ENCODE measurements at regions of chr10 and their contacts with region 1.

Region 1: DNA sequence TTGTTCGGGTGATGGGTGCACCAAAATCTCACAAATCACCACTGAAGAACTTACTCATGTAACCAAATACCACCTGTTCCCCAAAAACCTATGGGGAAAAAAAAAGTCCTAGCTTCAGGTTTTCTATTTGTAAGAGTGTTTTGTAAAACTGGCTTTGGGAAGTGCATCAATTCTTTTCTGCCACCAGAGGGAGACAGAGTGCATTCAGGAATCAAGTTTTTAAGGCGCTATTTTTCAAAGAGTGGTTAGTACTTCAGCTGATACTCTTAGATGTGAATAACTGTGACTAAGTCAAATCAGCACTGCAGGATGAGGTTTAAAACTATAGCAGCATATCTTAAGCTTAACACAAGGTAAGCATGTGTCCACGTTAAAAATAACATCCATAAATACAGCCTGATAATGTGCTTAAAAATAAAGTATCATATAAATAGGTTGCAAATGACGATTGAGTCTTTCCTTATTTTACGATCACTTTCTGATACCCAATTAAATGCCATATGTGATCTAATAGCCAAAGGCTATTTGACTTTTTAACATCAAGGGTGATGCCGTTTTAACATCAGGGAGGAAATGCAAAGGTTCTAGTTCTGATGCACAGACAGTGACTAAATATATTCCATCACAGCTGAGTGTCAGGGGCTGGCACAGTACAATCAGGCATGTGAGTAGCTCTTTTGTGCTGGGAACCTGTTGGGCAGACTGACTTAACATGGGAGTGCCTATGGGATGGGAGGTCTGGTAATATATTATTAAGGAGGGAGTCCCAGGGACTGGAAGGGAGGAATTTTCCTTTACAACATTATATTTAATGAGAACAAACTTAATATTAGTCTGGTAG is 10.6 kb upstream of the LYZL2 start:
- DNase-seq: peak; percentile 53
- ATAC-seq: no peak
- H3K4me3 ChIP-seq: no peak overlapping the region
- H3K27ac ChIP-seq: no peak overlapping the region
- H3K4me1 ChIP-seq: peaks cover 45% of the 10 kb centered on the region
- H3K27me3 ChIP-seq: peaks cover 0 to 4% of the 10 kb centered on the region in 2 experiments; a peak in 1 of 5 replicates
- CTCF ChIP-seq: peak; percentile 66
- EP300 ChIP-seq: no peak
- POLR2A ChIP-seq: no peak
- RAD21 ChIP-seq: no peak

Region 2: DNA sequence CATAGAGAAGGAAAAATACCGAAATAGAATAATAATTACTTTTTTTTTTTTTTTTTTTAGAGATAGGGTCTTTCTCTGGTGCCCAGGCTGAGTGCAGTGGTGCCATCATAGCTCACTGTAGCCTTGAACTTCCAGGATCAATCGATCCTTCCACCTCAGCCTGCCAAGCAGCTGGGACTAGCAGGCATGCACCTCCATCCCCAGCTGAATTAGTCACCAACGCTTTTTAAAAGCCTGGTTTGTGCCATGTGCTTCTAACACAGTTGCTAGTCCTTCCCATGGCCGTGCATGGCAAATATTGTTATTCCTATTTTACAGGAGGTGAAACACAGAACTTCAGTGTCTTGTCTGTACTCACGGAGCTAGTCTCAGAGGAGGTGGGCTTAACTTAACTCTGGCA is 33.9 kb before region 1 on chr10:
- CTCF ChIA-PET with region 1: no interaction called
- POLR2A ChIA-PET with region 1: interaction called, 4 read pairs
- in situ Hi-C with region 1: no loop called
- intact Hi-C with region 1: loop called (anchors 1 kb)
- DNase-seq: peak; percentile 48
- ATAC-seq: peak; percentile 10; the same call in 2 of the 3 replicates
- H3K4me3 ChIP-seq: peak overlapping the region in 1 of 3 experiments; percentile 26; a peak in 1 of 6 replicates
- H3K27ac ChIP-seq: peak overlapping the region; percentile 97
- H3K4me1 ChIP-seq: peaks cover 96% of the 10 kb centered on the region
- H3K27me3 ChIP-seq: no peaks in the 10 kb centered on the region
- CTCF ChIP-seq: no peak
- EP300 ChIP-seq: no peak
- POLR2A ChIP-seq: no peak
- RAD21 ChIP-seq: no peak

Region 3: GRCh38 chr10:30671026-30671616 is 31.0 kb after region 1 on chr10:
- CTCF ChIA-PET with region 1: no interaction called
- POLR2A ChIA-PET with region 1: no interaction called
- in situ Hi-C with region 1: no loop called
- intact Hi-C with region 1: no loop called
- DNase-seq: peak; percentile 67
- ATAC-seq: peak; percentile 77
- H3K4me3 ChIP-seq: 0 out of 6 replicates have a peak overlapping the region, but pooled peaks of 1 of the 3 experiments have one; percentile 17
- H3K27ac ChIP-seq: no peak overlapping the region
- H3K4me1 ChIP-seq: peaks cover 5% of the 10 kb centered on the region; the same call in 1 of the 2 replicates
- H3K27me3 ChIP-seq: peaks cover 1 to 26% of the 10 kb centered on the region in 2 experiments; a peak in 3 of 5 replicates
- CTCF ChIP-seq: peak; percentile 69
- EP300 ChIP-seq: no peak
- POLR2A ChIP-seq: no peak
- RAD21 ChIP-seq: no peak